ENCODE measurements at regions of chr2 and their contacts with region 1.

Region 1: DNA sequence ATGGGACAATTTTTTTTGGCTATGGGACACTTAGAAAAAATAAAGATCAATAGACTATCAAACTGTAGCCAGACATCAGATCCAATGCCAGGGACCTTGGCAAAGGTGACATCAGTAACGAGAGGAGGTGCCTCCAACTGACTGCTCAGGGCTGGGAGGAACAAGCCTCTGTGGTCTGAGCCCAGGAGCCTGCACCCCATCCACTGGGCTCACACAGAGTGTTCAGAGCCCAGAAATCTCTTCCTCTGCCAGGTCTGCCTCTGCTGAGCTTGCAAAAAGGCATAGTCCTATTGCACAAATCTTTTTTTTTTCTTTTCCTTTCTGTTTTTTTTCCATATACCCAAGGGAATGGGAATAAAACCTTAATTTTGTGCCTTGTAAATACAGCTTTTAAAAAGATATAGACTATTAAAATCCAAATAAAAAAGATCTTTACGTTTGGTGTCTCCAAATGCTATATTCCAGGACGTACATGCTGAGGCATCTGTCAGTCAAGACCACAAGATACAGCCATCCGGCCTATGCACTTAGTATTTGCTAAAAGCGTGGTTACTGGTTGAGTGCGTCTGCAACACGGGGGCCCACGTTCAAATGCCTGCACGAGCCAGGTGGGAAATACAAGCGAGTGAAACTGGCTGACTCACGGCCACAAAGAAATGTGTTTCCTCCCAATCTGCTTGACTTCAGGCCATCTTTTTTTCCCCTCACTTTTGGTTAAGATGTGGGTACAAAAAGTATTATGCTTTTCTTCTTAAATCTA is 7.8 kb upstream of the ARHGAP25 start:
- DNase-seq: no peak
- ATAC-seq: peak; percentile 30 to 86 (median 70)
- H3K4me3 ChIP-seq: no peak overlapping the region
- H3K27ac ChIP-seq: no peak overlapping the region
- H3K4me1 ChIP-seq: peaks cover 0 to 6% (median 0%) of the 10 kb centered on the region in 4 donors
- H3K27me3 ChIP-seq: no peaks in the 10 kb centered on the region
- CTCF ChIP-seq: no peak
- POLR2A ChIP-seq: no peak

Region 2: DNA sequence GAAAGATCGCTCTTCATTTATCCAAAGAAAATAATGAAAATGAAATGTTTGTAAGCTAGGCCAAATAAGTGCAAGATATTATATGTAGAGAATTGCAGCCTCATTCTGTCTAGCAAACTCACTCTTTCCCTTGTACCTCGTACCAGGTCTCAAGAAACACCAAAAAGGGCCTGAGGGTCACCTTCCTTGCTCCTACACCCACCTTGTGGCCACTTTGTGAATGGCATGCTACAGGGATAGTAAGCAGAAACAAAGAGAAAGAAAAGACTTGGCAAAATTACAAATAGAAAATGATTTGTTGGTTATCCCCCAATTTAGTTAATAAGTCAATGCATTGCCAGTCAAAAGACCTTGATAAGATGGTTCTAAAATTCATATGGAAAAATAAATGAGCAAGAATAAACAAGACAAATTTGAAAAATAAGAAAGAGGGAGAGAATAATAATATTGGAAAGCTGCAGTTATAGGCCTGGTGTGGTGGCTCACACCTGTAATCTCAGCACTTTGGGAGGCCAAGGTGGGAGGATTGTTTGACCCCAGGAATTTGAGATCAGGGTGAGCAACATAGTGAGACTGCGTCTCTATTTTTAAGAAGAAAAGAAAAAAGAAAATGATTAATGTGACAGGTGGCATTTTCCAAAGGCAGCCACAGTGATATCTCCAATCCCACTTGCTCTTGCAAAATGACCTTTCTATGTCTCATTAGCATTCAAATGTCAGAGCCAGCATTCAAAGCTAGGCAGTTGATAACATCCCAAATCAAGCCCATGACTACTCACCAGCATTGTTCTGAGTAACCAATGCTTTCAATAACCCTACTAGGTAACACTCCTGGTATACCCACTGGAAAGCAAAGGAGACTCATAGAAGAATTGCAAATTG is 183.2 kb after region 1 on chr2:
- intact Hi-C with region 1: loop called in 1 of 2 experiments (anchors 10 kb)
- DNase-seq: peak in 2 of 3 donors; percentile 48 to 64
- ATAC-seq: peak; percentile 69 to 77 (median 74)
- H3K4me3 ChIP-seq: no peak overlapping the region
- H3K27ac ChIP-seq: no peak overlapping the region
- H3K4me1 ChIP-seq: peaks cover 0 to 11% (median 0%) of the 10 kb centered on the region in 4 donors
- H3K27me3 ChIP-seq: no peaks in the 10 kb centered on the region
- CTCF ChIP-seq: peak; percentile 75 to 90 (median 87)
- POLR2A ChIP-seq: no peak